Naive thymus-derived CD8-positive, alpha-beta T cell (primary cell): ENCODE measurements at regions of chrX and their contacts with region 1.

Region 1: DNA sequence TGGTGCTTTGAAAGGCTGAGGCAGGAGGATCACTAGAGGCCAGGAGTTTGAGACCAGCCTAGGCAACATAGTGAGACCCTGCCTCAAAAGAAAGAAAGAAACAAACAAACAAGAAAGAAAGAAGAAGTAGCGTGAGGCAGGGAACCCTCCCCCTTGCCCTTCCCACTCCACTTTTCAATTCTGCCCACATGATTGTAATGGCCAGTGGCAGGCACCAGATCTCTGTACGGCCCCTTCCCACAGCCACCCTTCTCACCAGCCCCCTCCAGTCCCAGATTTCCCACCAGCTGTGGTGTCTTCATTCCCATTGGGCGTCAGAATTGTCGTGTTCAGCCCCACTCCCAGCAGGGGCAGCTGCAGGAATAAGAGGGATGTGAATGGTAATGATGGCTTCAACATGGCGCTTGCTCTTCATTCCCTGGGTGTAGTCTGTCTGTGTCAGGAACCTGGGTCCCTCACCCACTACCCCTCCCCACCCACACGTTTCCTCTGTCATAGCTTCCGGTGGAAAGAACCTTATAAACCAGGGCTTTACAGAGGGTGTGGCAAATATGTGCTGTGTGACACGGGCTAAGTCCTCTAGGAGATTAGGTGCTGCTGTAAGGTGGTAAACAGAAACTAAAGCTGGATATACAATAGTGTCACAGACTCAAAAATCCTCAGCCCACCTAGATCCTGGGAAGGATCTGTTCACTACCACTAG is at the start of gene IL2RG:
- DNase-seq: peak; percentile 46 to 92 (median 80)
- ATAC-seq: peak; percentile 84 to 90
- H3K4me3 Mint-ChIP-seq: peak within 1 kb of the TSS; percentile 83 to 98 (median 96)
- H3K27ac Mint-ChIP-seq: peak within 1 kb of the TSS; percentile 94 to 100 (median 98)
- H3K4me1 Mint-ChIP-seq: peaks cover 25 to 59% (median 45%) of the 10 kb centered on the region in 4 donors
- H3K27me3 Mint-ChIP-seq: peaks cover 0 to 2% (median 0%) of the 10 kb centered on the region in 5 donors
- polyA plus RNA-seq, gene IL2RG: 920 to 951 (median 948) TPM

Region 2: GRCh38 chrX:71095543-71095911 is 15.8 kb before region 1 on chrX and contains the start of gene FOXO4:
- POLR2A ChIA-PET with region 1: interaction called, 134 read pairs
- DNase-seq: peak in 9 of 10 donors; percentile 74 to 94 (median 87)
- ATAC-seq: peak; percentile 83 to 86
- H3K4me3 Mint-ChIP-seq: peak within 1 kb of the TSS; percentile 91 to 96 (median 94)
- H3K27ac Mint-ChIP-seq: peak within 1 kb of the TSS; percentile 84 to 99 (median 96)
- H3K4me1 Mint-ChIP-seq: peaks cover 11 to 40% (median 36%) of the 10 kb centered on the region in 4 donors
- H3K27me3 Mint-ChIP-seq: no peaks in the 10 kb centered on the region
- polyA plus RNA-seq, gene FOXO4: 1.3 to 2.1 (median 1.7) TPM

Region 3: DNA sequence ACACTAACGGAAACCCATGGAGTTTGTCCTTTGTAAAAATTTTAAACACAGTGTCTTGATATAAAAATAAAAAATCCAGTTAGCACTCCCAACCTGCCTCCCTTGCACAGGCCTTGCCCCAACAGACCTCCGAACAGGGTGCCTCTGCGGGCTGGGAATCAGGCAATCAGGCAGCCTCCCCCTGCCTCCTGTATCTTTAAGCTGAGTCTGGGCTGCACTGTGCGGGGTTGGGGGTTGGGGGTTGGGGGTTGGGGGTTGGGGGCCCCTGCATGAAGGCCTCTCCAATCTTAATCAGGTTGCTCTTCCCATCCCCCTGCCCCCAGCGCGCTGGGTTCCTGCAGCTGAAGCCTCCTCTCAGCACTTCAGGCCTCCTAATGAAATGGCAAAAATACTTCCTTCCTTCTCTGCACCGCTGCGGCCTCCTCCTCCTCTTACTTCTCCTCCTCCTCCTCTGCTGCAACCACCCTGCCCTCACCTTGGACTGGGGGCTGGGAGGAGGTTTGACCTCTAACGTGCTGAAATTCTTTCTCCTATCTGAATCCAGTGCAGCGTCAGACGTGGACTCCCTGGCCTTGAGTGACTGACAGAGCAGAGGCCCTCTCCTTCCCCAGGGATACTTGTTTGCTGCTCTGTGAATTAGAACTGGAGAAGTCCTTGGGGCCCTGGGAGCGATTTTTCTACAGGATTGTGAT is 60.0 kb after region 1 on chrX:
- POLR2A ChIA-PET with region 1: no interaction called
- DNase-seq: no peak
- ATAC-seq: no peak
- H3K4me3 Mint-ChIP-seq: peak overlapping the region in 3 of 10 donors; percentile 16 to 61 (median 33)
- H3K27ac Mint-ChIP-seq: peak overlapping the region in 7 of 10 donors; percentile 14 to 94 (median 47)
- H3K4me1 Mint-ChIP-seq: peaks cover 4 to 13% (median 8%) of the 10 kb centered on the region in 4 donors
- H3K27me3 Mint-ChIP-seq: no peaks in the 10 kb centered on the region